ENCODE measurements at regions of chr1 and their contacts with region 1.

Region 1: DNA sequence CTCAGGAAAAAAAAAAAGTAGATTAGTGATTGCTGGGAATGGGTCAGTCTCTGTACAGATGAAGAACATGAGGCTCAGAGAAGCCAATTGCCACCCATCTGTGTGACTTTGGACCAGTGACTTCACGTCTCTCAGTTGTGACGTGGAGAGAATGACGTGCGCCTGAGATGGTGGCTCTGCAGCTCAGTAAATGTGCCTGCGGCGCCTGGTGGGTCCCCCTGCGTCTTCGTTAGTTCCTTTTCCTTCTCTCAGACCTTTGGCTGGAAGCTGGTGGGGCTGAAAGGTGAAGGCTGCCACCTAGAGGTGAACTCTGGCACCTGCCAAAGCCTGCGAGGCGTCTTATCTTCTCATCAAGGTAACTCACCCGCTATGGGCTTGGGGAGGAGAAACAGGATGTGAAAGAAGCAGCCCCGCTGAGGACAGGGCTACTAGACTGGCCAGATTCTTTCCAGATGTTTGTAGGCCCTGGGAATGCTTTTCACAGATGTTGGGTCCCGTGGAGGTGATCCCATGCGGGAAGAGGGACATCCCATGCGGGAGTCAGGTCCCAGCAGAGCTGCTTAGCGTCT is 8.7 kb upstream of the E2F2 start:
- DNase-seq: peak; percentile 94

Region 2: DNA sequence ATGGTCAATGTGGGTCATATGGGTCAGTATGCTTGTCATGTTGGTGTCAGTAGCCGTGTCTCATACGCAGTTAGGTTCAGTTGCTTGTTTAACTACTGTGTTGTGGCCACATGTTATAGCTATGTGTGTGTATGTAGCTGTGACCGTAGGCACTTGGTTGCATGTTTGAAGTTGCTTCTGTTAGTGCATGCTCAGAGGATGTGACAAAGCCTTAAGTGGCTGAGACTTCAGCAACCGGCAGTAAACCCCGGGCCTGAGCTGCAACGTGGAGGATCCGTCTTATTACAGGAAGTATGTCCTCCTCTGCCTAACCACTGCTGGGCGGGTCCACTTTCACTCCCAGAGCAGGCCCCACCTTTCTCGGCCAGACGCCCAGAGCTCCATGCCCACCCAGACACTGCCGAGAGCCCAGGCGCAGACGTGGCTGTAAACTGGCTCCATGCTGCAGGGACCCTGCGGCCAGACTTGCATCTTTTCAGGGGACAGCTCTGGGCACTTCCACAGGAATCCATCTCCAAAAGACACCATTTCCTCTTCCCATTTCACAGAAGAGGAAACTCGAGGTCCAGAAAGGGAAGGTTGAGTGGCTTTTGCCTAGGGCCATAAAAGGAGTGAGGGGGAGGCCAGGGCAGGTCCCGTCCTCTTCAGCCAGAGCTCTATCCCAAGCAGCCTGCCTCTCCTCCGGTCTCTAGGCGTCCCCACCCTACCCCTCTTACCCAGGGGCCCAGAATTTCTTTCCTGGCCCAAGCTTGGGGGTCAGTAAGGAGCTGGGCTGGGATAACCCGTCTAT is 117.3 kb before region 1 on chr1:
- intact Hi-C with region 1: loop called (anchors 10 kb)
- DNase-seq: peak; percentile 90

Region 3: GRCh38 chr1:23470282-23471071 is 69.3 kb before region 1 on chr1:
- intact Hi-C with region 1: no loop called
- DNase-seq: no peak

Region 4: GRCh38 chr1:23496490-23497181 is 43.1 kb before region 1 on chr1:
- intact Hi-C with region 1: loop called (anchors 2 kb)
- DNase-seq: no peak

Region 5: GRCh38 chr1:23634842-23635651 is 95.3 kb after region 1 on chr1:
- intact Hi-C with region 1: loop called (anchors 1 kb)
- DNase-seq: no peak

Region 6: GRCh38 chr1:23743287-23744052 is 203.7 kb after region 1 on chr1 and contains the start of gene ELOA:
- intact Hi-C with region 1: loop called (anchors 10 kb)
- DNase-seq: peak; percentile 91
- total RNA-seq, gene ELOA: 28.8 TPM

Region 7: DNA sequence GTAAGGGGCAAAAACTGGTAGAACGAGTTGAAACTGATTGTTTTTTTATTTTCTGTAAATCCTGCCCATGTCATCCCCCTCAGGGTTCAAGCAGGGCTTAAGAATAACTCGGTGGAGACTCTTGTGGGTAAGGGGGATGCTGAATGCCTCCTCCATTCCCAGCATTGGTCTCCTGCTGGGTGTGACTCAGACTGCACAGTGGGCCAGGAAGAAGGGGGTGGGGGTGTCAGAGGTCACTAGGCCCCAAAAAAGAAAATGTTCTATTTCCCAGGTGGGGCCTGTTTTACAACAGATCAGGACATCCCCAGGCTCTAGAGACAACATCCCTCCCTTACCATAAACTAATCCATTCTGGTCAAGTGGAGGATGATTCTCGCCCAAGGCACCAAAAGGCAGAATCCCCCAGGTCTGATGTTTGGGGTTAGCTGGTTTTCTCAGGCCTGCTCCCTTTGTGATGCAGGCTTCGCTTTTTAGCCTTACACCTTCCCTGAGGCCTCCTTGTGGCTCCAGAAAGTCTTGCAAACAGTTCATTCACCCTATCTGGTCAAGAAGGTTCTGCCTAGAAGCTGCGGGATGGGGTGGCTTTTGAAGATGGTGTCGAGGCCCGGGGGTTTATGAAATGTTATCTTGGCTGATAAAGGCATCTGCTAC is 768.7 kb after region 1 on chr1:
- intact Hi-C with region 1: no loop called
- DNase-seq: no peak

Measured in cardiac septum (tissue), 1 donor.